ENCODE measurements at regions of chr10 and their contacts with region 1.

Region 1: DNA sequence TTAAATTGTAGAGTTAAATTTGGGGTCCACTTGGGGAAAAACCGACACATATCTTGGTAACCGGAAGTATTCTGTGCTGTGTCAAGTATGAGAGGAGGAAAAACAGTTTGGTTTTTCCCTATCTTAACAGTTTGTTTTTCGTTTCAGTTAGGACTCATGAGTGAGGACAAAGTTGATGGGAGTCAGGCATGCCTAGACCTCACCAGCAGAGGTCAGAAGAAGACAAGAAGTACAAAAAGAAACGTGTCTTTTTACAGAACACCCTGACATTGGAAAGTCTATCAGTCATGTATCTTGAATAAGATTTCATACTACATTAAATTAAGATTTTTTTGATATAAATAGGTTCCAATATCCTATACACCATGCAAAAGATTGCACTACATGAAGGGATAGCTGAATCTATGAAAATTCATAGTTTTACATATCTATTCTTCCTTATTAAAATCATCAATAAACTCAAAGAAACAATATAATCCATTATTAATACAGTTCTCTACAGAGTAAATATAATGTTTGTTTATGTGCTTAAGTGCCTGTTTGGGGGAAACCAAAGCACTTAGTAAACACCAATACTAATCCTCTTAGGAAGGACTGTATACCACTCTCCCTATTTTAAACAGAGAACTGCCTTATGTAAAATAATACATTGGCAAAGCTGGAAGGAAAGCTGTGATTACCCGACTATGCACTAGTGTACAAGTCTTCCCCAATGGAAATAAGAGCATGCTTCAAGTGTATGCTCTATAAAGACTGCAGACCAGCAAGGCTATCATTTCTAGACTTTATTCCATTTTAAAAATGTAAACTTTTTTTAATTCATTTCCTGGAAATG is 95.6 kb downstream of the USP6NL start:
- DNase-seq: no peak
- H3K4me3 ChIP-seq: no peak overlapping the region
- H3K27me3 ChIP-seq: no peaks in the 10 kb centered on the region
- CTCF ChIP-seq: peak; percentile 86

Region 2: GRCh38 chr10:11411926-11412545 is 103.8 kb before region 1 on chr10:
- CTCF ChIA-PET with region 1: no interaction called
- POLR2A ChIA-PET with region 1: no interaction called
- DNase-seq: no peak
- H3K4me3 ChIP-seq: no peak overlapping the region
- H3K27me3 ChIP-seq: no peaks in the 10 kb centered on the region
- CTCF ChIP-seq: no peak

Region 3: DNA sequence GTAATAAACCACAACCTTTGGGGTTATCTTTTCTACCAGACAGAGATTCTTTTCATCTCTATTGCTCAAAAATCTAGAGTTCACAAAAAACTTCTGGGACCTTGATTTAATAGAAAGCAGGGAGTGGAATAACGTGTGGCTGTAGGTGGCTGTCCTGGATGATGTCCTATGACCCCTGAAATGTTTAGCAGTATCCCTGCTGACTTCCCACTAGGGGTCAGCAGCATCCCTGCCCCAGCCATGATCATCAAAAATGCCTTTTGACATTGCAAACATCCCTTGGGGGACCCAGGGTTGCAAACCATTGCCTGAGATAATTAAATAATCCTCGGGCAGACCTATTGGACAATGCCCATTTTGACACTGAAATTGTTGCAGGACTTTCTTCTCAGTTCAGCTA is 81.5 kb before region 1 on chr10:
- CTCF ChIA-PET with region 1: no interaction called
- POLR2A ChIA-PET with region 1: no interaction called
- DNase-seq: no peak
- H3K4me3 ChIP-seq: no peak overlapping the region
- H3K27me3 ChIP-seq: peaks cover 1% of the 10 kb centered on the region
- CTCF ChIP-seq: peak; percentile 14; the same call in 1 of the 2 replicates

Region 4: GRCh38 chr10:11505639-11506038 is 10.2 kb before region 1 on chr10:
- CTCF ChIA-PET with region 1: interaction called, 14 read pairs
- POLR2A ChIA-PET with region 1: no interaction called
- DNase-seq: no peak
- H3K4me3 ChIP-seq: no peak overlapping the region
- H3K27me3 ChIP-seq: no peaks in the 10 kb centered on the region
- CTCF ChIP-seq: no peak

Region 5: GRCh38 chr10:11724938-11725776 is 209.3 kb after region 1 on chr10:
- CTCF ChIA-PET with region 1: interaction called, 90 read pairs
- POLR2A ChIA-PET with region 1: no interaction called
- DNase-seq: no peak
- H3K4me3 ChIP-seq: no peak overlapping the region
- H3K27me3 ChIP-seq: peaks cover 5% of the 10 kb centered on the region; the same call in 1 of the 2 replicates
- CTCF ChIP-seq: peak; percentile 81

Measured in BJ (cell line).